Calu3 (cell line): ENCODE measurements at regions of chr5 and their contacts with region 1.

Region 1: DNA sequence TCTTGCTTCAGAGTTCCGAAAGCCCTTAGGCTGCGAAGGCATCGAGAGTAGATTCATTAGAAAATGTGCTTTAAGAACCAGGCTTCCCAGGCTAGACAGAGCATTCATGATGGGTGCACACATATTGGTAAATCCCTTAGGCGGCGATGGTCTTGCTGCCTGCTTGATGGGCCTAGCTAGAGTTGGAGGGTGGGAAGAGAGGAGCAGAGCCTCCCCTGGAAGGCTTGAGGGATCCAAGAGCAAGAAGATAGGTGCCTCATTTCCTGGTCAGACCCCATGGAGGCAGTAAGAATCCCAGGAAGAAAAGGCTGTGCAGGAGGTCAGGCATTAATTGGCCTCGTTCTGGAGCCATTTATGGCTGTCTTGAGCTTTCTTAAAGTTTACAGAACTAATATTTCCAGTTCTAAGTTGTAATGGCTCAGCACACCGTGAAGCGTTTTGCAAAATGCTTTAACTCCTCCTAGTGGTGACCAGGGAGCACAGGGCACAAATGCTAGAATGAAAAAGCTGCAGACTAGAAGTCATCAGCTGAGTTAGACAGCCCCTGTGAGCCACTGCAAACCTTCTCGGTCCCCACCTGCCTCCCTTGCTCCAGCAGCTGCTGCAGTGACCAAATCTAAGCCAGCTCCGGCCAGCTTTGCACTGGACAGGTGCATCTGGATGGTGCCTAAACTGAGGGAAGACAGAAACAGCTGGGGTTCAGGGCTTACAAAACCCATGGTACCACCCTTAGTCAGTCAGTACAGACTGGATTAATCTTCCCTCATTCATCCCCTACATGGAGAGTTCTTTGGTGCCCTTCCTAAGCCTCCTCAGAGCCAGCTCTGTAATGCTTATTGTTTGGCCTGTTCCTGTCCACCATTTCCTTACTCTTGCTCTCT is 14.7 kb downstream of the SLC45A2 start:
- DNase-seq: peak; percentile 34
- H3K4me3 Mint-ChIP-seq: no peak overlapping the region
- H3K27ac Mint-ChIP-seq: no peak overlapping the region
- H3K4me1 Mint-ChIP-seq: no peaks in the 10 kb centered on the region
- H3K27me3 Mint-ChIP-seq: peaks cover 8% of the 10 kb centered on the region
- CTCF ChIP-seq: peak; percentile 69

Region 2: GRCh38 chr5:33257807-33258483 is 711.9 kb before region 1 on chr5:
- CTCF ChIA-PET with region 1: no interaction called
- intact Hi-C with region 1: no loop called
- DNase-seq: no peak
- H3K4me3 Mint-ChIP-seq: no peak overlapping the region
- H3K27ac Mint-ChIP-seq: no peak overlapping the region
- H3K4me1 Mint-ChIP-seq: no peaks in the 10 kb centered on the region
- H3K27me3 Mint-ChIP-seq: no peaks in the 10 kb centered on the region
- CTCF ChIP-seq: no peak

Region 3: GRCh38 chr5:33470544-33470943 is 499.3 kb before region 1 on chr5:
- CTCF ChIA-PET with region 1: interaction called, 25 read pairs
- intact Hi-C with region 1: loop called (anchors 1 kb)
- DNase-seq: peak; percentile 19
- H3K4me3 Mint-ChIP-seq: no peak overlapping the region
- H3K27ac Mint-ChIP-seq: no peak overlapping the region
- H3K4me1 Mint-ChIP-seq: peaks cover 8% of the 10 kb centered on the region
- H3K27me3 Mint-ChIP-seq: no peaks in the 10 kb centered on the region
- CTCF ChIP-seq: peak; percentile 33

Region 4: GRCh38 chr5:34787035-34787434 is 817.2 kb after region 1 on chr5:
- CTCF ChIA-PET with region 1: no interaction called
- intact Hi-C with region 1: no loop called
- DNase-seq: no peak
- H3K4me3 Mint-ChIP-seq: no peak overlapping the region
- H3K27ac Mint-ChIP-seq: no peak overlapping the region
- H3K4me1 Mint-ChIP-seq: no peaks in the 10 kb centered on the region
- H3K27me3 Mint-ChIP-seq: no peaks in the 10 kb centered on the region
- CTCF ChIP-seq: no peak